ENCODE measurements at regions of chr11 and their contacts with region 1.

Region 1: GRCh38 chr11:112074026-112074811 is at the start of gene NKAPD1:
- DNase-seq: peak; percentile 69
- ATAC-seq: peak; percentile 82
- H3K4me3 Mint-ChIP-seq: peak within 1 kb of the TSS; percentile 96
- H3K27ac Mint-ChIP-seq: peak within 1 kb of the TSS; percentile 95
- H3K4me1 Mint-ChIP-seq: peaks cover 25% of the 10 kb centered on the region
- H3K27me3 Mint-ChIP-seq: no peaks in the 10 kb centered on the region
- CTCF ChIP-seq: no peak
- total RNA-seq, gene NKAPD1: 24.0 and 26.3 TPM in 2 replicates

Region 2: GRCh38 chr11:112050721-112051120 is 23.5 kb before region 1 on chr11:
- CTCF ChIA-PET with region 1: no interaction called
- POLR2A ChIA-PET with region 1: interaction called, 3 read pairs
- intact Hi-C with region 1: loop called (anchors 1 kb)
- DNase-seq: no peak
- ATAC-seq: peak; percentile 64
- H3K4me3 Mint-ChIP-seq: peak overlapping the region; percentile 69
- H3K27ac Mint-ChIP-seq: peak overlapping the region; percentile 91
- H3K4me1 Mint-ChIP-seq: peaks cover 56% of the 10 kb centered on the region
- H3K27me3 Mint-ChIP-seq: no peaks in the 10 kb centered on the region
- CTCF ChIP-seq: no peak

Measured in activated B cell treated with CpG ODN at 0.5 μM for 24 hours (primary cell).